CD8-positive, alpha-beta T cell (primary cell): ENCODE measurements at regions of chr13 and their contacts with region 1.

Region 1: DNA sequence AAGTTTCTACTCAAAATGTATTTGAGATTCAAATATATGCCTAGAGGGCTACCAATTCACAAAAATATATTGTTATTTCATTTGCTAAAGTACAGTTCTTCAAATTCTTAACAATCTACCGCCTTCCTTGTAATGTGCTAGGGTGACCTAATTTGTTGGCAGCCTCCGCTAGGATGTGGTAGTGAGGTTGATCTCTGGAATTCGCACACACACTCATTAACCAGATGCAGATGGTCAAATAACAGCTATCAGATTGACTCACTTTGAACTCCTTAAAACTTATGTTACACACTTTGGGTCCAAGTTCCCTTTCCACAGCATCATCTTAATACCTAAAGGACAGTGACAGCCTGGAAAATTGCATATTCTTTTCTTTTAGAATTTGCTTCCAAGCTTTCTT is 367.3 kb downstream of the DCT start:
- DNase-seq: no peak
- ATAC-seq: no peak
- H3K4me3 ChIP-seq: no peak overlapping the region
- H3K4me3 Mint-ChIP-seq: no peak overlapping the region
- H3K27ac ChIP-seq: no peak overlapping the region
- H3K27ac Mint-ChIP-seq: no peak overlapping the region
- H3K4me1 ChIP-seq: no peaks in the 10 kb centered on the region
- H3K4me1 Mint-ChIP-seq: no peaks in the 10 kb centered on the region
- H3K27me3 ChIP-seq: no peaks in the 10 kb centered on the region
- H3K27me3 Mint-ChIP-seq: no peaks in the 10 kb centered on the region
- CTCF ChIP-seq: no peak

Region 2: GRCh38 chr13:94170145-94170571 is 57.9 kb after region 1 on chr13:
- CTCF ChIA-PET with region 1: interaction called, 4 read pairs
- POLR2A ChIA-PET with region 1: no interaction called
- intact Hi-C with region 1: loop called in 1 of 2 experiments (anchors 10 kb)
- DNase-seq: no peak
- ATAC-seq: no peak
- H3K4me3 ChIP-seq: no peak overlapping the region
- H3K4me3 Mint-ChIP-seq: no peak overlapping the region
- H3K27ac ChIP-seq: no peak overlapping the region
- H3K27ac Mint-ChIP-seq: no peak overlapping the region
- H3K4me1 ChIP-seq: no peaks in the 10 kb centered on the region
- H3K4me1 Mint-ChIP-seq: no peaks in the 10 kb centered on the region
- H3K27me3 ChIP-seq: peaks cover 0 to 3% of the 10 kb centered on the region in 2 experiments
- H3K27me3 Mint-ChIP-seq: peaks cover 8% of the 10 kb centered on the region
- CTCF ChIP-seq: no peak